Activated naive CD4-positive, alpha-beta T cell treated with anti-CD3 and anti-CD28 coated beads for 36 hours (primary cell): ENCODE measurements at regions of chr10 and their contacts with region 1.

Region 1: GRCh38 chr10:119859420-119860258 is 13.0 kb downstream of the MCMBP start:
- DNase-seq: no peak
- H3K4me3 Mint-ChIP-seq: no peak overlapping the region
- H3K27ac Mint-ChIP-seq: no peak overlapping the region
- H3K4me1 Mint-ChIP-seq: peaks cover 43% of the 10 kb centered on the region
- H3K27me3 Mint-ChIP-seq: no peaks in the 10 kb centered on the region

Region 2: DNA sequence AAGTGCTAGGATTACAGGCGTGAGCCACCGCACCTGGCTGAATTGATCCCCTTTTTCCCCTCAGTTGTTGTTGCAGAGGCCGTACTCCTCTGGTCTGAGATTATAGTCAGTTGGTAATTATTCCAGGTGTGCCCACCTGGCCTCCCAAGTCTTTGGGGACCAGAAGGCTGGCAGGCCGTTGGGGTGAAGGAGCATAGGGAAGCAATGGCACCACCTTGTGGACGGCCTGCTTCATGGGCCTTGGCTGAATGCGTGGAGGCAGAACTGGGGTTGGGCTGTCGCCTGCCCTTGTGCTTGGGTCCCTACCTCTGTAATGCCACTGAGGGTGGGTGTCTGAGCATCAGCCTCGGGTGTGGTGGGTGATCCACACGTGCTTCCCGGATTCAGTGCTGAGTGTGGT is 442.8 kb before region 1 on chr10:
- CTCF ChIA-PET with region 1: no interaction called
- intact Hi-C with region 1: no loop called
- DNase-seq: peak; percentile 85
- H3K4me3 Mint-ChIP-seq: no peak overlapping the region
- H3K27ac Mint-ChIP-seq: no peak overlapping the region
- H3K4me1 Mint-ChIP-seq: peaks cover 1% of the 10 kb centered on the region
- H3K27me3 Mint-ChIP-seq: no peaks in the 10 kb centered on the region

Region 3: DNA sequence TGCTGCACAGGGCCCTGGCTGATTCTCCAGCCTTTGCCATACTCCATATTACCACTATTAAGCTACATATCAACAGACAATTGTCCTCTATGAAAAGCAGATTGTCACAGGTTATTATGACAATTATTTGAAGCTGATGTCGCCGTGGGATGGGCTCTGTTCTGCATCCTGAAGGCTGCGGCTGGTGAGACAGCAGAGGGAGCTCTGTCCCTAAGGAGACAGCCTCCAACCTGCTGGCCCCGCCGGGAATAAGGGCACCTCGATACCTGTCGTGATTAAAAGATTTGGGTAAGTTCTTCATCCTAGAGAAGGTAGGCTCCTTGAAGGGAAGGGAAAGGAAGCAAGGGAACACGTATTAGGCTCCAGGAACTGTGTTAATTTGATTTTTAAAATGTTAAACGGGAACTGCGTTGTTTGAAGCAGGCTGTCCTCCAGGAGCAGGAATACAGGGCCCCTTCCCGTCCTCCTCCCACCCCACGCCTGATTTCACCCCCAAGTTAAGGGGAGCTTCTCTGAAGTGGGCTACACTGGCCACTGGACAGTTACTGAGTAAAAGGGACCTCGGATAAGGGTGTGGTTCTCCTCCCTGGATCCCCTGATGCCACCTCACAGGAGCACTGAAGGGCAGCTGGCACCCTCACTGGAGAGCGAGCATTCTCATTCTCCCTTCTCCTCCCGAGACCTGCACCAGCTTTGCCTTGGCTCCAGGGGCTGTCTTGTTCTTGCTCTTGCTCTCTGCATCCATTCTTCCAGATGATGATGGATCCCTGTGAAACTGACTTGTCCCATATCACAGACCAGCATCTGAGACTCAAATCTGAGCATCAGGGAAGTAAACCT is 251.1 kb before region 1 on chr10:
- CTCF ChIA-PET with region 1: interaction called, 4 read pairs
- intact Hi-C with region 1: loop called (anchors 1 kb)
- DNase-seq: peak; percentile 68
- H3K4me3 Mint-ChIP-seq: peak overlapping the region; percentile 33
- H3K27ac Mint-ChIP-seq: no peak overlapping the region
- H3K4me1 Mint-ChIP-seq: peaks cover 9% of the 10 kb centered on the region
- H3K27me3 Mint-ChIP-seq: no peaks in the 10 kb centered on the region

Region 4: DNA sequence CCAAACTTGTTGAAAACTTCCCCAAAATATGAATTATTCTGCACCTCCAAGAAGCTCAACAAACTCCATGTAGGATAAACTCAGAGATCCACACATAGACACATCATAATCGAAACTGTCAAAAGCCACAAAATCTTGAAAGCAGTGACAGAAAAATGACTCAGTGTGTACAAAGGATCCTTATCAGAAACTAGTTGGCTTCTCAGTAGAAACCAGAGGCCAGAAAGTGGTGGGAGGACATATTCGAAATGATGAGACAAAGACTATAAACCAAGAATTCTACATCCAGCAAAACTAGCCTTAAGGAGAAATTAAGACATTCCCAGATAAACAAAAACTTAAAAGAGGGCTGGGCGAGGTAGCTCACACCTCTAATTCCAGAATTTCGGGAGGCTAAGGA is 25.5 kb before region 1 on chr10:
- CTCF ChIA-PET with region 1: interaction called, 13 read pairs
- intact Hi-C with region 1: no loop called
- DNase-seq: peak; percentile 18
- H3K4me3 Mint-ChIP-seq: no peak overlapping the region
- H3K27ac Mint-ChIP-seq: peak overlapping the region; percentile 46
- H3K4me1 Mint-ChIP-seq: peaks cover 23% of the 10 kb centered on the region
- H3K27me3 Mint-ChIP-seq: no peaks in the 10 kb centered on the region

Region 5: GRCh38 chr10:119872860-119873681 is 13.4 kb after region 1 on chr10:
- CTCF ChIA-PET with region 1: interaction called, 28 read pairs
- intact Hi-C with region 1: loop called (anchors 1 kb)
- DNase-seq: peak; percentile 84
- H3K4me3 Mint-ChIP-seq: peak overlapping the region; percentile 83
- H3K27ac Mint-ChIP-seq: peak overlapping the region; percentile 84
- H3K4me1 Mint-ChIP-seq: peaks cover 38% of the 10 kb centered on the region
- H3K27me3 Mint-ChIP-seq: no peaks in the 10 kb centered on the region

Region 6: GRCh38 chr10:119903946-119904666 is 44.5 kb after region 1 on chr10:
- CTCF ChIA-PET with region 1: no interaction called
- intact Hi-C with region 1: loop called (anchors 5 kb)
- DNase-seq: no peak
- H3K4me3 Mint-ChIP-seq: no peak overlapping the region
- H3K27ac Mint-ChIP-seq: no peak overlapping the region
- H3K4me1 Mint-ChIP-seq: peaks cover 6% of the 10 kb centered on the region
- H3K27me3 Mint-ChIP-seq: no peaks in the 10 kb centered on the region

Region 7: GRCh38 chr10:120048391-120048790 is 188.8 kb after region 1 on chr10:
- CTCF ChIA-PET with region 1: no interaction called
- intact Hi-C with region 1: no loop called
- DNase-seq: no peak
- H3K4me3 Mint-ChIP-seq: no peak overlapping the region
- H3K27ac Mint-ChIP-seq: no peak overlapping the region
- H3K4me1 Mint-ChIP-seq: no peaks in the 10 kb centered on the region
- H3K27me3 Mint-ChIP-seq: peaks cover 9% of the 10 kb centered on the region

Region 8: DNA sequence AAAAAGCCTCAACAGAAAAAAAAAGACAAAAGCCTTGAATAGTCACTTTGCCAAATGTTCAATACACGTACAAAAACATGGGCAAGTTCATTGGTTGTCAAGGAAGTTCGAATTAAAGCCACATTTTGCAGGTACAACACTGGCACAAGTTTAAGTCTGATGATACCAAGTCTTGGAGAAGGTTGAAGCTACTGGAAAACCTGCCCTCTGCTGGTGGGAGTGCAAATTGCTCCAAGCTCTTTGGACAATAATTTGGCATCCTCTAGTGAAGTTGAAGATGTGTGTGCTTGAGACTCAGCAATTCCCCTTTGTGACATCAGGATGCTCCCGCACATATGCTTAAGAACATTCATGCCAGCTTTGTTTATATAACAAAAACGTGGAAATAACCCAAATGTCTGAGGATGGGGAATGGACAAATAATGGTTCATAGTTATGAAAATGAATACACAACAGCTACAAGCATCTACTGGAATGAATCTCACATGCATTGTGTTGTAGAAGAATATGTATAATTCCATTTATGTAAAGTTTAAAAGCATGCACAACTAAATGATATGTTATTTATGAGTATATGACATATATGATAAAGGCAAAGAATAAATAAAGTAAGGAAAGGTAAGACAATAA is 477.4 kb after region 1 on chr10:
- CTCF ChIA-PET with region 1: no interaction called
- intact Hi-C with region 1: loop called (anchors 10 kb)
- DNase-seq: peak; percentile 80
- H3K4me3 Mint-ChIP-seq: no peak overlapping the region
- H3K27ac Mint-ChIP-seq: no peak overlapping the region
- H3K4me1 Mint-ChIP-seq: no peaks in the 10 kb centered on the region
- H3K27me3 Mint-ChIP-seq: peaks cover 12% of the 10 kb centered on the region